ENCODE measurements at regions of chr2 and their contacts with region 1.

Region 1: GRCh38 chr2:164560181-164560792 is 61.0 kb downstream of the GRB14 start:
- DNase-seq: no peak
- H3K4me3 ChIP-seq: no peak overlapping the region
- H3K27ac ChIP-seq: no peak overlapping the region
- H3K4me1 ChIP-seq: peaks cover 0 to 5% of the 10 kb centered on the region in 2 donors
- H3K27me3 ChIP-seq: no peaks in the 10 kb centered on the region
- CTCF ChIP-seq: peak; percentile 32 to 82 (median 68)
- POLR2A ChIP-seq: no peak

Region 2: DNA sequence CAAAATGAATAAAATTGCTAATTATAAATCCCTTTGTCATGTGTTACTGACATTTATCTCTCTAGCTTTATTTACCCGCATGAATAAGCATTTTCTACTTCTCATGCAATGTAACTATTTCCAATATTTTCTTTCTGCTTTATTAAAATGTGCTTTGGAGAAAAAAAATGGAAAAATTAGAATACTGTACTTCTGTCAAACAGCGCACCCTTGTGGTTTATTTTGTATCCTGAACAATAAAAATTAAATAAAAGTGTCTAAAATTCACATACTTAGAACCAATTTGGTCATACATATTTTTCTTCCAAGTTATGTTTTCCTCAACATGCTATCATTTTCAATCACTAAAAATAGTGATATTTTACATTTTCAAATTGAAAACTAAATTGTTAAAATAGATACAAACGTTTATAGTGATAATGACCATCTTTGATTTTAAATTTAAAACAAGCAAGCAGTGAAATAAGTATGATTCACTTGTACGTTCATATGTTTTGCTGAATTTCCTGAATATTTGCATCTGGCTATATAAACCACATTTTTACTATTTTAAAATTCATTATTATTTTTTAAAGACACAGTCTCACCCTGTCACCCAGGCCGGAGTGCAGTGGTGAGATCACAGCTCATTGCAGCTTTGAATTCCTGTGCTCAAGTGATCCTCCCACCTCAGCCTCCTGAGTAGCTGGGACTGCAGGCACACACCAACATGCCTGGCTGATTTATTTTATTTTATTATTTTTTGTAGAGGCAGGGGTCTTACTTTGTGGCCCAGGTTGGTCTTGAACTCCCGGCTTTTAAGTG is 156.9 kb after region 1 on chr2:
- intact Hi-C with region 1: loop called (anchors 5 kb)
- DNase-seq: no peak
- H3K4me3 ChIP-seq: no peak overlapping the region
- H3K27ac ChIP-seq: no peak overlapping the region
- H3K4me1 ChIP-seq: no peaks in the 10 kb centered on the region
- H3K27me3 ChIP-seq: no peaks in the 10 kb centered on the region
- CTCF ChIP-seq: peak; percentile 16 to 64 (median 46)
- POLR2A ChIP-seq: no peak